ENCODE measurements at regions of chr10 and their contacts with region 1.

Region 1: DNA sequence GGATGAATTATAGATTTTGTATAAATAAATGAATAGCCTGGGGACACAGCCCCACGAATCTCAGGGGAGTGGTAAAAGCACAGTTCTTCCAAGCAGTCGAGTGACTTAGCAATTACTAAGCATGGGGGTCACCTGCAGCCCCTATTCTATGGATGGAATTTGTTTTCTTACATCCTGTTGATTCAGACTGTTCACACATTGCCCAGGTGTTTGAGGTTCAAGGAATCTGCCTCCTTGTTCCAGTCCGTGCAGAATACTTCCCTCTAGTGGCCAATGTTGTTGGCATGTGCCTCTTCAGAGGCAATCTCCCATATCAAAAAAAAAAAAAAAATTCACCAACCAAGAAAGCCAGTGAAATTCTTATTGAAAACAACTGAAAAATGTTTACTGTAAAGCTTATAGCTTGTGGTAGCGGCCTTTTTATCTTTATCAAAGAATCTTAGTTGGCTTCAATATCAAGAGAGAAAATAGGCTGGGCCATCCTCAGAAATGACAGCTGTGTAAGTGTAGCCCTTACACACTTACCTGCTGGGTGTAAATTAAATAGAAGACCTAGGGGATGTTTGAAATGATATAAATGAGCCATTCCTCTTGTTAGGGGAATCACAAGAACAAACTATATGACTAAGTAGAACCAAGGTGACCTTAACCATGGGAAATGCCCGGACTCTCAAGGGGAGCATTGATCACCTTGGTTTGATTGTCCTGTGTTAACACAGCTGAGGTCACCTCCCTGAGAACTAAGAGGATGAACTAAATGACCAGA is 7.8 kb downstream of the LIPM start:
- DNase-seq: peak; percentile 74
- H3K4me3 Mint-ChIP-seq: no peak overlapping the region
- H3K27ac Mint-ChIP-seq: no peak overlapping the region
- H3K4me1 Mint-ChIP-seq: peaks cover 8% of the 10 kb centered on the region
- H3K27me3 Mint-ChIP-seq: no peaks in the 10 kb centered on the region
- CTCF ChIP-seq: peak; percentile 60

Region 2: GRCh38 chr10:88473989-88474883 is 336.1 kb before region 1 on chr10:
- CTCF ChIA-PET with region 1: interaction called, 3 read pairs
- POLR2A ChIA-PET with region 1: no interaction called
- intact Hi-C with region 1: loop called (anchors 10 kb)
- DNase-seq: peak; percentile 95
- H3K4me3 Mint-ChIP-seq: peak overlapping the region; percentile 13
- H3K27ac Mint-ChIP-seq: peak overlapping the region; percentile 80
- H3K4me1 Mint-ChIP-seq: peaks cover 39% of the 10 kb centered on the region
- H3K27me3 Mint-ChIP-seq: no peaks in the 10 kb centered on the region
- CTCF ChIP-seq: no peak

Region 3: DNA sequence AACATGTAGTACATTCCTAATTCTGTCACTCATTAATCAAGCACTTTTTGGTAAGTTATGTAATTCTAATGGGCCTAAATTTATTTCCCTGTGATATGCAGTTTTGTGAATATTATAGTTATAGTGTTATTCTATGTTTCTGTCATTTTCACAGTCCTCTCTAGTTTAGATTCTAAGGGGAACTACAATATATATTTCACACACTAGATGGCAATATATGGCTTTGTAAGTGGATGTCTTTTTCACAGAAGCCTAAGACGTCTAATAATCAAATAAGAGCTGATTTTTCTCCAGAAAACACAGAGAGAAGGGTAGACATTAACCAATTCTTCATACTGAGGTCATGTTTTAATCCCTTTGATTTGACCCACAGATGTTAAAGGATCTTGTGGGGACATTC is 245.3 kb before region 1 on chr10:
- CTCF ChIA-PET with region 1: interaction called, 81 read pairs
- POLR2A ChIA-PET with region 1: interaction called, 3 read pairs
- intact Hi-C with region 1: loop called (anchors 1 kb)
- DNase-seq: peak; percentile 35
- H3K4me3 Mint-ChIP-seq: no peak overlapping the region
- H3K27ac Mint-ChIP-seq: no peak overlapping the region
- H3K4me1 Mint-ChIP-seq: no peaks in the 10 kb centered on the region
- H3K27me3 Mint-ChIP-seq: peaks cover 17% of the 10 kb centered on the region
- CTCF ChIP-seq: peak; percentile 48

Region 4: DNA sequence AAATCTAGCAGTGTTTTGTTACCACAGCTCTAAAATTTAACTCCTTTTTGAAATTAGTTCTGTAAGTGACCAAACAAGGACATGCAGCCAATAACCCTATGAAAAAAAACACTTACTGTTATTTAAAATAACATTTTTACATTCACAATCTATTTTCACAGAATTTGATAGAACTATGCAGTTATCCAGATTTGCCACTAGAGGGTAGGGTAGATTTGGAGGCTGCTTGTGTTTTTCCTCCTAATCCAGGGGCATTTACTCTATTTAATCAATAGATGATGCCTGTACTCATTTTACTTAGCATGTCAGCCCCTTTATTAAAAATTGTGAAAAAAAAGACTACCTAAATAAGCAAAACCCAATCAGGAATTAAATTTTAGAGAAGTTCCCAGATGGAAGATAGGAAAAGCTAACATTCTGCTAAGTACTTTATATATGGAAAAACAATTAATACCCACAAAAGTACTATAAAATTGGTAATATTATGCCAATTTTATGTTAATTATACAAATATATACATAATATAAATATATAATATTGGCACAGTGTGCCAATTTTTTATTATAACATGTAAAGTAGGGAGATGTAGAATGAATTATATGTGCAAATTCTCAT is 122.4 kb before region 1 on chr10:
- CTCF ChIA-PET with region 1: interaction called, 63 read pairs
- POLR2A ChIA-PET with region 1: interaction called, 4 read pairs
- intact Hi-C with region 1: loop called (anchors 1 kb)
- DNase-seq: peak; percentile 40
- H3K4me3 Mint-ChIP-seq: no peak overlapping the region
- H3K27ac Mint-ChIP-seq: no peak overlapping the region
- H3K4me1 Mint-ChIP-seq: no peaks in the 10 kb centered on the region
- H3K27me3 Mint-ChIP-seq: no peaks in the 10 kb centered on the region
- CTCF ChIP-seq: peak; percentile 75

Region 5: GRCh38 chr10:88693392-88694020 is 116.9 kb before region 1 on chr10:
- CTCF ChIA-PET with region 1: interaction called, 63 read pairs
- POLR2A ChIA-PET with region 1: no interaction called
- intact Hi-C with region 1: loop called (anchors 1 kb)
- DNase-seq: peak; percentile 27
- H3K4me3 Mint-ChIP-seq: no peak overlapping the region
- H3K27ac Mint-ChIP-seq: no peak overlapping the region
- H3K4me1 Mint-ChIP-seq: no peaks in the 10 kb centered on the region
- H3K27me3 Mint-ChIP-seq: no peaks in the 10 kb centered on the region
- CTCF ChIP-seq: peak; percentile 24

Region 6: GRCh38 chr10:88820748-88821389 is 10.5 kb after region 1 on chr10:
- CTCF ChIA-PET with region 1: interaction called, 19 read pairs
- POLR2A ChIA-PET with region 1: interaction called, 4 read pairs
- intact Hi-C with region 1: no loop called
- DNase-seq: peak; percentile 85
- H3K4me3 Mint-ChIP-seq: no peak overlapping the region
- H3K27ac Mint-ChIP-seq: peak overlapping the region; percentile 96
- H3K4me1 Mint-ChIP-seq: peaks cover 17% of the 10 kb centered on the region
- H3K27me3 Mint-ChIP-seq: no peaks in the 10 kb centered on the region
- CTCF ChIP-seq: no peak

Region 7: GRCh38 chr10:88848499-88848898 is 38.1 kb after region 1 on chr10:
- CTCF ChIA-PET with region 1: no interaction called
- POLR2A ChIA-PET with region 1: no interaction called
- intact Hi-C with region 1: no loop called
- DNase-seq: peak; percentile 86
- H3K4me3 Mint-ChIP-seq: peak overlapping the region; percentile 59
- H3K27ac Mint-ChIP-seq: peak overlapping the region; percentile 11
- H3K4me1 Mint-ChIP-seq: peaks cover 31% of the 10 kb centered on the region
- H3K27me3 Mint-ChIP-seq: no peaks in the 10 kb centered on the region
- CTCF ChIP-seq: no peak